ENCODE measurements at regions of chr5 and their contacts with region 1.

Region 1: GRCh38 chr5:159456722-159457465 is 126.6 kb upstream of the IL12B start:
- DNase-seq: peak; percentile 59
- H3K4me3 Mint-ChIP-seq: peak overlapping the region; percentile 46
- H3K27ac Mint-ChIP-seq: peak overlapping the region; percentile 88
- H3K4me1 Mint-ChIP-seq: peaks cover 50% of the 10 kb centered on the region
- H3K27me3 Mint-ChIP-seq: peaks cover 50% of the 10 kb centered on the region

Region 2: DNA sequence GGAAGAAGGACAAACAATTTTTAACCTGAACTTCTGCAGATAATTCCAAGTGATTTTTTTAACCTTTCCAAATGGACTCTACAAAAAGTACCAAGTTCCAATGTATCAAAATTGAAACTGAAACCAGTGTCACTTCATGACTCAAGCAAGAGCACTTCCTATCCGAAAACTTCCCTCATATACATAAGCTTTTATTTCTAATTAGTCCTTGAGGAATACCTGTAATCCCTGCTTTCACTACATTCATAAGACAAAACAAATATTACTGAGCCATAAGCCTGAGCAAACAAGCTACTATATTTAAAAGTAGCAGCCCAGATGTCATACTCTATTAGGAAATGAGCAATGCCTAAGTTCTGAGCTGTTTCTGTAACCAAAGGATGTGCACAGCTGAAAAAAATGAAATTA is 581.6 kb before region 1 on chr5:
- intact Hi-C with region 1: loop called (anchors 2 kb)
- DNase-seq: no peak
- H3K4me3 Mint-ChIP-seq: peak overlapping the region; percentile 9
- H3K27ac Mint-ChIP-seq: peak overlapping the region; percentile 55
- H3K4me1 Mint-ChIP-seq: peaks cover 47% of the 10 kb centered on the region
- H3K27me3 Mint-ChIP-seq: peaks cover 4% of the 10 kb centered on the region

Region 3: DNA sequence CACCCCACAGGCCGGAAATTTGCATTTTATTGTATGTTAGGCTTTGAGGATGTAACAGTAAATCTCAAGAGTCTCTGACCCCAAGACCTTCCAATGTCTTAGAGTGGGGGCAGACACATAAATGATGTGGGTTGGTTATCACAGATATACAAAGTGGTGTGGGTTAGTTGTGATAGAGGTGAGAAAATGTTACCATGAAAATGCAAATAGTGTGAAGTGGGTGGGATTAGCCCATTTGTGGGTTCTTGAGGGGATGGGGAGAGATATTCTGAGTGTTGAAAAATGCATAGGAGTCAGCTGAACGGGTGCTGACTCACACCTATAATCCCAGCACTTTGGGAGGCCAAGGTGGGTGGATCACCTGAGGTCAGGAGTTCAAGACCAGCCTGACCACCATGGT is 239.7 kb before region 1 on chr5:
- intact Hi-C with region 1: loop called (anchors 1 kb)
- DNase-seq: no peak
- H3K4me3 Mint-ChIP-seq: no peak overlapping the region
- H3K27ac Mint-ChIP-seq: peak overlapping the region; percentile 76
- H3K4me1 Mint-ChIP-seq: peaks cover 17% of the 10 kb centered on the region
- H3K27me3 Mint-ChIP-seq: peaks cover 8% of the 10 kb centered on the region

Region 4: GRCh38 chr5:159290741-159291140 is 166.2 kb before region 1 on chr5:
- intact Hi-C with region 1: no loop called
- DNase-seq: no peak
- H3K4me3 Mint-ChIP-seq: no peak overlapping the region
- H3K27ac Mint-ChIP-seq: no peak overlapping the region
- H3K4me1 Mint-ChIP-seq: no peaks in the 10 kb centered on the region
- H3K27me3 Mint-ChIP-seq: peaks cover 5% of the 10 kb centered on the region

Region 5: DNA sequence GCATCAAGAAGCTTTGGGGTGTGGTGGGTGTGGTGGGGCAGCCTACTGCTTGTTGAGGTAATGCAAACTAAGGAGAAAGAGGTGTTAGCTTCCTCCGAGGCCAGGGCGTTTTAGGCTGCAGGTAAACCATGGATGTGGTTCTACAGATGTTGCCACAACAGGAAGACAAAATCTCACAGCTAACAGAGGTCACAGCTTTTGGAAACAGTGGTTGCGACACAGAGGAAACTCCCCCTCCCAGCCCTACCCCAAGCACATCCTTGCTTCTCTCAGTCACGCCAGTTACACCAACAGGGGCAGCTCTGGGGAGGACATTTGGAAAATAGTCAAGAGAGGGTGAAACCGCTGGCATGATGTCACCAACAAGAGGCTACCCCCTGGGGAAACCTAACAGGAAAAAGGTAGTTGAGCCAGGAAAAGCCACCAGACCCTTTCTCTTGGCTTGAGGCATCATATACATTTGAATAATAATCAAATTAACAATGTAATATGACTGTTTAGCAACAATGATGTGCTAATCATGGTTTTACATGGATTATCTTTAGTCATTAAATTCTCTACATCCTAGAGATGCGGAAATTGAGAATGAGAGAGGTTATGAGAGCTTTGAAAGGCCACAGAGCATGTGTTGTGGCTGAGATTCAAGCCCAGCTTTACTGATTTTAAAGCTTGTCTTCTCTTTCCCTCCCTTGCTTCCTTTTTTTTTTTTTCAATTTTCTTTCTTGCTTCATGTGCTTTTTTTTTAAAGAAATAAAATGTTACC is 44.4 kb before region 1 on chr5:
- intact Hi-C with region 1: loop called (anchors 1 kb)
- DNase-seq: peak; percentile 81
- H3K4me3 Mint-ChIP-seq: peak overlapping the region; percentile 47
- H3K27ac Mint-ChIP-seq: peak overlapping the region; percentile 80
- H3K4me1 Mint-ChIP-seq: peaks cover 64% of the 10 kb centered on the region
- H3K27me3 Mint-ChIP-seq: peaks cover 13% of the 10 kb centered on the region

Region 6: DNA sequence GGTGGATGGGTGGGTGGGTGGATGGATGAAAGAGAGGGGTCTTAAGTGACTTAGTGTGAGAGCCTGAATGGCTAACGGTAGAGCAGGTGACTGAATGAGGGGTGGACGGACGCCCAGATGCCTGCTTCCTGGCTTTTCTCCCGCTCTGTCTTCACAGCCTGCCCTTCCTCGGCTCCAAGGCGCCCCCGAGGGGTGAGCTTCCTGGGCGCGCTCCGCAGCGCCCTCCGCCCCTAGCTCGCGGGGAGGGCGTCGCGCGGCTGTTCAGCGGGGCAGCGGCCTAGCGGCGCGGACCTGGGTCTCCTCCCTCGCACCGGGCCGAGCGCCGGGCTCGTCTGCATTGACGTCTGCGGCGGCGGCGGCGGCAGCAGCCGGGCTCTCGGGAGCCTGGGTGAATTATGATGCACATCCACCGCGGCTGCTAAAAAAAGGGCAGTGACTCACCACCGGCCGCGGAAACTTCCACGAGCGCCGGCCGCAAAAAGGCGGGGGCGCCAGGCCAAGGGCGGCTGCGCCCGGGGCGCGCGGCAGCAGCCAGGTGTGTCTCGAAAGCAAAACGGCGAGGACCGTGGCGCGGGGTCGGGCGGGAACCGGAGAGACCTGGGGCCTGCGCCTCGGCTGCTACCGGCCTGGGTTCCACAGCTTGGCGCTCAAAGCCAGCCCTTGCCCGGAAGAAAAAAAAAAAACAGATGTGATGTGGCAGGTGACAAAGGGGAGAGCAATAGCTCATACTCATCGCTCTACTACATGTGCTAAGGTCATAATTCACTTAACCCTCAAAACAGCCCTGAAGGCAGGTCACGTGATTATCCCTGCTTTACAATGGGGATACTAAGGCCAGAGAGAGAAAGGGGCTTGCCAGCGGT is 316.4 kb after region 1 on chr5:
- intact Hi-C with region 1: loop called (anchors 1 kb)
- DNase-seq: peak; percentile 79
- H3K4me3 Mint-ChIP-seq: peak overlapping the region; percentile 49
- H3K27ac Mint-ChIP-seq: peak overlapping the region; percentile 44
- H3K4me1 Mint-ChIP-seq: peaks cover 33% of the 10 kb centered on the region
- H3K27me3 Mint-ChIP-seq: peaks cover 29% of the 10 kb centered on the region

Region 7: DNA sequence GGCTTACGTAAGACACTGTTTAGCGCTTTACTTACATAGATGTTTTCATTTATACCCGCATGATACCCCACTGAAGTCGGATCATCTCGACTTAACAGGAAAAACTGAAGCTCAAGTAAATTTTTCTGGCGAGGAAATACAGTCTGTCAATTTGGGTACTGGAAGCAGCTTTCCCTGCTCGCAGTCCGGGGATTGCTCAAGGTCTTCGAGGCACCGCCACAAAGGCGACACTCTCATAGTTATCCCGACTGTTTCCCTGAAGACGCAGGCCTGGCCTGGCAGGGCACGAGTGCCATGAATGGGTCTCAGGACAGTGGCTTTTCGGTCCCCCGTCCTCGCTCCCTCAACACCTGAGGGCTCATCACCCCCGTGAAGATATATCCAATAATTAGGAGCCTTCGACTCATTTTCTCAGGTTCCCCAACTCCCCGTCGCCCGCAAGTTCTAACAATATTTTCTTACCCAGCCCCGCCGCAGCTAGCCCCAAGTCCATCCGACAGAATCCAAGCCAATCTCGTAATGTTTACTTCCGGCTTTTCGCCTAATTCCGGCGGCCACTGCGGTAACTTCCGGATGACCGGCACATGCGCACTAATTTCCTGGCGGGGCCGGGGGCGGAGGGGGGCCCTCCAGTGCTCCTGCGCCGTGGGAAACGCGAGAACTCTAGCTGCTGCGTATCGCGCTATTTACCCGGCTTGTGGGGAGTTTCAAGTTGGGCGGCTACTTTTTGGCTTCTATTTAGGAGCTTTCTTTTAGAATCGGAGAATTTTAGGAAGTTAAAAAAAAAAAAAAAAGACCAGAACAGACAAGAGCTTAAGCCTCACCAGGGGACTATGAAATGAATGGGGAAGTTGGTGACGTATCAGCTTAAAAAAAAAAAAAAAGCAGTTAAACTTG is 961.9 kb after region 1 on chr5 and contains the start of gene SLU7:
- intact Hi-C with region 1: loop called (anchors 10 kb)
- DNase-seq: peak; percentile 91
- H3K4me3 Mint-ChIP-seq: peak within 1 kb of the TSS; percentile 94
- H3K27ac Mint-ChIP-seq: peak within 1 kb of the TSS; percentile 95
- H3K4me1 Mint-ChIP-seq: peaks cover 77% of the 10 kb centered on the region
- H3K27me3 Mint-ChIP-seq: no peaks in the 10 kb centered on the region
- total RNA-seq, gene SLU7: 37.4 and 47.4 TPM in 2 replicates